ENCODE measurements at regions of chr2 and their contacts with region 1.

Region 1: GRCh38 chr2:105744091-105744908 is 412 bp upstream of the NCK2 start:
- DNase-seq: peak; percentile 75
- H3K4me3 ChIP-seq: peak overlapping the region; percentile 69 to 96 (median 86)
- H3K27ac ChIP-seq: peak overlapping the region; percentile 88 to 94 (median 92)
- H3K4me1 ChIP-seq: peaks cover 0 to 42% (median 31%) of the 10 kb centered on the region in 4 donors
- H3K27me3 ChIP-seq: no peaks in the 10 kb centered on the region
- CTCF ChIP-seq: no peak
- EP300 ChIP-seq: no peak
- POLR2A ChIP-seq: no peak

Region 2: DNA sequence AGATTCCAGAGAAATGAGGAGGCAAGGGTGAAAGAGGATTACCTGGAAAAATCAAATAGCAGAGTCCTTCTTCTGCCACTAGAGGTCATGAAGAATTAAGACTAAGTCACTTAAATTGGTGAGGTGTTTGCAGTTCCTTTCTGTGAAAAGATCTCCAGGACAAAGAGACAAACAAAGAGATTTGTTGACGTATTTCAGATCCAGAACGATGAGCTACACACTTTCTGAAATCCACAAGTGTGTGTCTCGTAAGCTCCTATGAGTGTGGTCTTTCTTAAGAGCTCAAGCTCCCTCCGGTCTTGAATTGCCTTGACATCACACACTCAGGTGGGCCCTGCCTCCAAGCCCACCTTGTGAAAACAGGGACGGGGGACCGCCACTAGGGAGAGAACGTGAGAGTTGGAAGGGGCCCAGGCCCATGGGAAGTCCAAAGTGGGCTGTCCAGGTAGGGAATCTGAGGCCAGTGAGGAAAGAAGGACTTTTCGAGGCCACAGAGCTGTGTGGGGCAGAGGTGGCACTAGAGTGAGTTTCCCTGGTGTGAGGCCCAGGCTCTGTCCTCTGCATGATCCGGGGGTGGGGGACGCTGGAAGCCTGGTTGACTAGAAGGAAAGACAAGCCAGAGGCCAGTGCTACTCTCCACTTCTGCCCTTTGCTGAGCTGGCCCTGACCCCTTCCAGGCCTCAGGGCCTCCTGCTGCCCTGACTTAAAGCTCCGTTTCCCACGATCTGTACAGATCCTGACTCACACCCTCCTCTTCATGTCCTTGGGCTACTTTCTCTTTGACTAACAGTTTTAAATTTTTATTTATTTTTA is 167.7 kb before region 1 on chr2:
- intact Hi-C with region 1: loop called (anchors 2 kb)
- DNase-seq: no peak
- H3K4me3 ChIP-seq: no peak overlapping the region
- H3K27ac ChIP-seq: peak overlapping the region in 1 of 4 donors; percentile 7
- H3K4me1 ChIP-seq: peaks cover 0 to 16% (median 7%) of the 10 kb centered on the region in 4 donors
- H3K27me3 ChIP-seq: no peaks in the 10 kb centered on the region
- CTCF ChIP-seq: peak; percentile 26 to 61 (median 53)
- EP300 ChIP-seq: no peak
- POLR2A ChIP-seq: no peak

Region 3: DNA sequence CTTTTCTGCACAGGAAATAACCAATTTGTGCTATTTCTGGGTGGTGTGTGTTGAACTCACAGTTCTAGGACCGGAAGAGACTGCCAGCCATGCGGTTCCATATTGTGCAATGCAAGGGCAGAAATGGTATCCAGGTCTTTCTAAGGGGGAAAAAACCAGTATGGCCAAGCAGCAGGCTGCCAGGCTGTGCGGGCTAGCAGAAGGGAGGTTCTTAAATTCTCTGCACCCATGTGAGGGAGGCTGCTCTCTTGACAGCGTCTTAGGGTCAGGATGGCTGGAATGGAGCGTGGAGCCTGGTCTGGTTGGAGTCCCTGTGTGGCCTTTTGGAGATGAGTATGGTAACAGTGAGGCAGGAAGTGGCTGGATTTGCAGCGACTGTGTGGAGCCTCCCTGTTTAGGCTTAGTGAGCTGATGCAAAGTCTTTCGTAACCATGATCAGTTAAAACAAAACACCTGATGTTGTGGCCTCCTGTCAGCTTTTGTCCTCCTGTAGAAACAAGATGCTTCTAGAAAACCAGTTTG is 53.1 kb after region 1 on chr2:
- intact Hi-C with region 1: no loop called
- DNase-seq: no peak
- H3K4me3 ChIP-seq: no peak overlapping the region
- H3K27ac ChIP-seq: peak overlapping the region; percentile 43 to 56 (median 52)
- H3K4me1 ChIP-seq: peaks cover 0 to 75% (median 45%) of the 10 kb centered on the region in 4 donors
- H3K27me3 ChIP-seq: no peaks in the 10 kb centered on the region
- CTCF ChIP-seq: no peak
- EP300 ChIP-seq: no peak
- POLR2A ChIP-seq: no peak

Region 4: GRCh38 chr2:105812180-105813044 is 68.1 kb after region 1 on chr2:
- intact Hi-C with region 1: loop called (anchors 5 kb)
- DNase-seq: no peak
- H3K4me3 ChIP-seq: no peak overlapping the region
- H3K27ac ChIP-seq: peak overlapping the region; percentile 55 to 75 (median 64)
- H3K4me1 ChIP-seq: peaks cover 0 to 67% (median 62%) of the 10 kb centered on the region in 4 donors
- H3K27me3 ChIP-seq: no peaks in the 10 kb centered on the region
- CTCF ChIP-seq: no peak
- EP300 ChIP-seq: no peak
- POLR2A ChIP-seq: no peak

Region 5: DNA sequence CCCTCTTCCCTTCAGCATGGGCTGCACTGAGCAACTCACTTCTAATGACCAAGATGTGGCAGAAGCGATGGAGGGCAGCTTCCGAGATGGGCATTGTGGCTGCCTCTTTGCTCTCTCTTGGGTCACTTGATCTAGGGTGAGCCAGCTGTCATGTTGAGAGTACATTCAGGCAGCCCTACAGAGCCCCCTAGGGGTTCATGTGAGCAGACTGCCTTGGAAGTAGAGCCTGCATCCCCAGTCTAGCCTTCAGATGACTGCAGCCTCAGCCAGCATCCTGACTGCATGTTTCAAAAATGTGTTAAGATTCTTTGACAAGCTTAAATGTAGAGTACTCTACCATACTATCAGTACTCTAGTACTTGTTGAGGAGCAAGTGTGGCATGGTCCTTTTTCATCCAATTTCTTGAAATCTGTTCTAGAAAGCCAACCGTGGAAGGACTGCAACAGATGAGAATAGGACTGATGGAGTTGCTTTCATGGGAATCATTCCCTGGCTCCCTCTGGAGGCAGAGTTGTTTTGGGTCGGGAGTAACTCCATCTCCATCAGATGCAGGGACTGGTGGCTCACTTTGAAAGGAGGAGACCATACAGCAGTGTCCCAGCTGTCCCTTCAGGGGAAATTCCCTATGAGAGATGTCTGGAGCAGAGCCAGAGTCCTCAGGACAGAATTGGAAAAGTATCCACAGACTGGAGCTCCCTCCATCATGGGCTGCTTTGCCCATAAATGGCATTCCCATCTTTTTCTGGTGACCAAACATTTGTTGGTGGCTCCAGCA is 144.5 kb after region 1 on chr2:
- intact Hi-C with region 1: loop called (anchors 10 kb)
- DNase-seq: no peak
- H3K4me3 ChIP-seq: no peak overlapping the region
- H3K27ac ChIP-seq: no peak overlapping the region
- H3K4me1 ChIP-seq: peaks cover 0 to 41% (median 28%) of the 10 kb centered on the region in 4 donors
- H3K27me3 ChIP-seq: no peaks in the 10 kb centered on the region
- CTCF ChIP-seq: no peak
- EP300 ChIP-seq: no peak
- POLR2A ChIP-seq: no peak

Region 6: GRCh38 chr2:106030287-106031268 is 286.3 kb after region 1 on chr2:
- intact Hi-C with region 1: loop called (anchors 5 kb)
- DNase-seq: peak; percentile 86
- H3K4me3 ChIP-seq: peak overlapping the region in 1 of 4 donors; percentile 24
- H3K27ac ChIP-seq: peak overlapping the region; percentile 84 to 93 (median 92)
- H3K4me1 ChIP-seq: peaks cover 0 to 36% (median 25%) of the 10 kb centered on the region in 4 donors
- H3K27me3 ChIP-seq: no peaks in the 10 kb centered on the region
- CTCF ChIP-seq: no peak
- EP300 ChIP-seq: peak in 3 of 4 donors; percentile 33 to 66 (median 53)
- POLR2A ChIP-seq: no peak

Region 7: GRCh38 chr2:106085181-106085940 is 341.1 kb after region 1 on chr2:
- intact Hi-C with region 1: loop called (anchors 5 kb)
- DNase-seq: no peak
- H3K4me3 ChIP-seq: no peak overlapping the region
- H3K27ac ChIP-seq: peak overlapping the region in 2 of 4 donors; percentile 2 to 6
- H3K4me1 ChIP-seq: peaks cover 0 to 9% (median 6%) of the 10 kb centered on the region in 4 donors
- H3K27me3 ChIP-seq: no peaks in the 10 kb centered on the region
- CTCF ChIP-seq: peak in 3 of 4 experiments; percentile 24 to 48 (median 48)
- EP300 ChIP-seq: no peak
- POLR2A ChIP-seq: no peak

Region 8: GRCh38 chr2:106193977-106194778 is 449.9 kb after region 1 on chr2 and contains the start of gene UXS1:
- intact Hi-C with region 1: loop called (anchors 10 kb)
- DNase-seq: peak; percentile 99
- H3K4me3 ChIP-seq: peak within 1 kb of the TSS; percentile 76 to 95 (median 85)
- H3K27ac ChIP-seq: peak within 1 kb of the TSS; percentile 80 to 91 (median 86)
- H3K4me1 ChIP-seq: peaks cover 0 to 42% (median 30%) of the 10 kb centered on the region in 4 donors
- H3K27me3 ChIP-seq: no peaks in the 10 kb centered on the region
- CTCF ChIP-seq: no peak
- EP300 ChIP-seq: peak in 1 of 4 donors; percentile 24
- POLR2A ChIP-seq: peak; percentile 35 to 61
- total RNA-seq, gene UXS1: 15.5 to 59.8 (median 32.9) TPM